Motor neuron (in vitro differentiated cells): ENCODE measurements at regions of chr7 and their contacts with region 1.

Region 1: GRCh38 chr7:106041140-106041717 is 70.9 kb downstream of the SYPL1 start:
- ATAC-seq: peak in 5 of 8 experiments; percentile 6 to 53 (median 23)
- H3K4me3 ChIP-seq: no peak overlapping the region
- H3K27ac ChIP-seq: no peak overlapping the region
- H3K4me1 ChIP-seq: peaks cover 12 to 28% of the 10 kb centered on the region in 2 donors

Region 2: DNA sequence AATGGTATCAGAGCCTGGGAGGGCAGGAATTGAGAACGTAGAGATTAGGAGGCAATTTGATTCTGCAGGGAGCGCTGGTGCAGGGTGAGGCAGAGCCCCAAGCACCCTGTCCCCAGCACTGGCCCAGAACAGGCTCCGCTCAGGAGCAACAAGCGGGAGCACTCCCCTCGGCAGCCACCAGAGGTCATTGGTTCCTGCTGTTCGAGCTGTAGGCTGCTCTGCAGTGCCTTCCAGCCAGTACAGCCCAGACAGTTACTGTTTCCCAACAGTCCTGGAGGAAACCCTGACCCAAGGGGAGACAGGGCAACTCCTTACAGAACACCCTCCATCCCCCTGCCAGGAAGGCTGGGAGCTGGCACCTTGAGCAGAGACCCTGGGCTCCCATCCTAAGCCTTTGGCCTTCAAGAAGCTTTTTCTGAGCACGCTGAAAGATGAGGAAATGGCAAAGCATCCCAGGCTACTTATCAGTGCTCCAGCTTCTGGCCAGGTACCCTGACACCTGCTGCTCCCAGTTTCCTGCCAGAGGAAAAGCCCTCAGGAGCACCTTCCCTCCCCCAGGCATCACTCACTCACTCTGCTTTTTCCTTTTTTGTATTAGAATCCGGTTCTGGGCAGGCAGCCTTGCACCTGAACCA is 388.8 kb before region 1 on chr7:
- in situ Hi-C with region 1: loop called in 7 of 9 experiments (anchors 25 kb)
- ATAC-seq: peak; percentile 72 to 89 (median 78)
- H3K4me3 ChIP-seq: no peak overlapping the region
- H3K27ac ChIP-seq: no peak overlapping the region
- H3K4me1 ChIP-seq: peaks cover 36 to 40% of the 10 kb centered on the region in 2 donors

Region 3: DNA sequence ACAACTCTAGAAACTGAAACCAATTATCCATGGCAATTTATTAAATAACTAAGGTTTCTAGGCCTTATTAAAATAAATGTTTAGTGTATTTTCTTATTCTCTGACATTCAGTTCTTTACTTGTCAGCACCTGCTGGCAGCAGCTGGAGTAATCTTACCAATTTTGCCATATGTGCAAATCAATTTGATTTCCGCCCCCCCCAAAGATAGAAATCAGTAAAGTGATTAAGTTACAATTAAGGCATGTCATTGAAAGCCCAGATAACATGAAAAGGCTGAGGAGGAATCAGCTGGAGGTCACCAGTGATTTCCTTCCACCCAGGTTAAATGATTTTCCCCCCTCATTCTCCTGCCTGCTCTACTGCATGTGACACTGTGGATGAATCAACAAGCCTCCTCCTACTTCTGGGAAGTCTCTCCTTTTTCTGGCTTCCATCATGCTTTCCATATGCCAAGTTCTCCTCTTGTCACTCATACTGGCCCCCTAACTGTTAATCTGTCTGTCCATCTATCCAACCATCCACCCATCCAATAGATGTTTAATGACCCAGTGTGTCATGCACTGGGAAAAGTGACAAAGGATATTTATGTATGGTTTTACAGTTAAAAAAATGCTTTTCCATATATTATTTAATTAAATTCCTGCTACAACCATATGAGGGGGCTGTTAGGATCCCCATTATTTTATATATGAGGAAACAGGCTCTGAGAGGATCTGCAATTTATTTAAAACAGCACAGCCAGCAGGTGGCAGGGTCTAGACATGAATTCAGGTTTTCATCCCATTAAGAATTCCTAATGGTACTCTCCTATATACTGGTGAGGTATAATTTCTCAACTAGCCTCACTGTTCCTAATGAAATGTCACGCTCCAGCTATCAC is 281.3 kb before region 1 on chr7:
- in situ Hi-C with region 1: loop called in 7 of 9 experiments (anchors 25 kb)
- ATAC-seq: peak; percentile 51 to 80 (median 68)
- H3K4me3 ChIP-seq: no peak overlapping the region
- H3K27ac ChIP-seq: no peak overlapping the region
- H3K4me1 ChIP-seq: peaks cover 11 to 31% of the 10 kb centered on the region in 2 donors

Region 4: GRCh38 chr7:106504645-106505044 is 463.4 kb after region 1 on chr7:
- in situ Hi-C with region 1: no loop called
- ATAC-seq: peak in 2 of 8 experiments; percentile 41 to 74
- H3K4me3 ChIP-seq: no peak overlapping the region
- H3K27ac ChIP-seq: no peak overlapping the region
- H3K4me1 ChIP-seq: peaks cover 5% of the 10 kb centered on the region in 2 donors

Region 5: DNA sequence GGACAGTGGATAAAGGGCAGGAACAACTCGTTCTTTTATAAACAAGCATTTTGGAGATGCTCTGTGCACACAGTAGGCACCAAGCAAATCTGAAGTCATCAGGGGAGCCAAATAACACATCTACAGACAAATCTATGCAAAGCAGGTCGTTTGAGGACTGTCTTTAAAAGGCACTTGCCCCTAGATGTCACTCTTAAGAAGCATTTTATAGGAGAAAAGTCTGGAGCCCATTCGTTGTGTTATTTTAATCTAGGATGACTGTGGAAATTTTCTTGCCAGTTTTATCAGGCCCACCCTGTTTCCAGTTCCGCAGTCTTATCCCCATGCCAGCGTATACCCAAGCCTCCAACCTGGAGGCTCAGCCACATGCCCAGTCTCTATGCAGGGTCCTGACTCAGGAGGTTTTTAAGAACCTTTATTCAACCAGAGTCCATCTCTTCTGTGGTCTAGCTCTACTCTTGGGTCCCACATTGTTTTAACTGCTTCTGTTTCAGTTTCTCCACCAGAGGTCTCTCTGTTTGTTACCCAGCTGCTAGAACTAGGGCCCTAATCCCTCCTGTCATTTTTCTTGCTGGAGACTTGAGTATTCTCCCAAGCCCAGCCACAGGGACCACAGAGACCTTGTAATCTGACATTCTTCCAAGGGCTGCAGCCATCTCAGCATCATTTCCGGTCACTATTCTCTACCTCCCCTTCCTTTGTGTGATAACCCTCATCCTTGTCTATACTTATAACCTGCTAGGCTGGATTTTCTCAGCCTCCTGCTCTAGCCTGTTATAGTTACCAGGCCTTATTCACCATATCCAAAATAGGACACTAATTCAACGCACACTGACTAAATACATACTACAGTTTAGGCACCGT is 850.5 kb after region 1 on chr7:
- in situ Hi-C with region 1: no loop called
- ATAC-seq: peak in 2 of 8 experiments; percentile 33 to 58
- H3K4me3 ChIP-seq: no peak overlapping the region
- H3K27ac ChIP-seq: no peak overlapping the region
- H3K4me1 ChIP-seq: no peaks in the 10 kb centered on the region